HepG2 (cell line): ENCODE measurements at regions of chr13 and their contacts with region 1.

Region 1: DNA sequence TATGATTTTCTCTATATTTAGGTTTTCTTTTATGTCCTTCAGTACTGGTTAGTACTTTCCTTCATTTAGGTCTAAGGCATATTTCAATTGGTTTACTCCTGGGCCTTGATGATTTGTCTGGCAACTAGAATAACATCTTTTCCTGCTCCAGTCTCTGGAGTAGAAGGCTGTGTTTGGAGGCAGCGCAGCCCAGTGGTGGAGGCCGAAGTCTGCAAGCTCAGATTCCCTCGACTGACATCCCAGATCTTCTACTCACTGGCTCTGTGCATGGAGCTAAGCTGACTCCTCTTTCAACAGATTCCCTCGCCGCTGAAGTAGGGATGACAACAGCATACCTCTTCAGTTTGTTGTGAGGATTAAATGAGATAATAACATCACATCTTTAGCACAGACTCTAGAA is 141.0 kb downstream of the RAP2A start:
- DNase-seq: peak; percentile 38
- ATAC-seq: peak; percentile 99
- H3K4me3 ChIP-seq: no peak overlapping the region
- H3K27ac ChIP-seq: no peak overlapping the region
- H3K4me1 ChIP-seq: peaks cover 11% of the 10 kb centered on the region
- H3K27me3 ChIP-seq: no peaks in the 10 kb centered on the region
- CTCF ChIP-seq: peak; percentile 91
- EP300 ChIP-seq: no peak
- POLR2A ChIP-seq: no peak
- RAD21 ChIP-seq: peak; percentile 80

Region 2: GRCh38 chr13:97018029-97018831 is 556.7 kb before region 1 on chr13:
- CTCF ChIA-PET with region 1: no interaction called
- POLR2A ChIA-PET with region 1: no interaction called
- in situ Hi-C with region 1: no loop called
- intact Hi-C with region 1: loop called (anchors 10 kb)
- DNase-seq: peak; percentile 36
- ATAC-seq: peak; percentile 85
- H3K4me3 ChIP-seq: no peak overlapping the region
- H3K27ac ChIP-seq: no peak overlapping the region
- H3K4me1 ChIP-seq: no peaks in the 10 kb centered on the region
- H3K27me3 ChIP-seq: peaks cover 1 to 8% of the 10 kb centered on the region in 2 experiments; a peak in 1 of 5 replicates
- CTCF ChIP-seq: peak; percentile 81
- EP300 ChIP-seq: no peak
- POLR2A ChIP-seq: no peak
- RAD21 ChIP-seq: no peak

Region 3: DNA sequence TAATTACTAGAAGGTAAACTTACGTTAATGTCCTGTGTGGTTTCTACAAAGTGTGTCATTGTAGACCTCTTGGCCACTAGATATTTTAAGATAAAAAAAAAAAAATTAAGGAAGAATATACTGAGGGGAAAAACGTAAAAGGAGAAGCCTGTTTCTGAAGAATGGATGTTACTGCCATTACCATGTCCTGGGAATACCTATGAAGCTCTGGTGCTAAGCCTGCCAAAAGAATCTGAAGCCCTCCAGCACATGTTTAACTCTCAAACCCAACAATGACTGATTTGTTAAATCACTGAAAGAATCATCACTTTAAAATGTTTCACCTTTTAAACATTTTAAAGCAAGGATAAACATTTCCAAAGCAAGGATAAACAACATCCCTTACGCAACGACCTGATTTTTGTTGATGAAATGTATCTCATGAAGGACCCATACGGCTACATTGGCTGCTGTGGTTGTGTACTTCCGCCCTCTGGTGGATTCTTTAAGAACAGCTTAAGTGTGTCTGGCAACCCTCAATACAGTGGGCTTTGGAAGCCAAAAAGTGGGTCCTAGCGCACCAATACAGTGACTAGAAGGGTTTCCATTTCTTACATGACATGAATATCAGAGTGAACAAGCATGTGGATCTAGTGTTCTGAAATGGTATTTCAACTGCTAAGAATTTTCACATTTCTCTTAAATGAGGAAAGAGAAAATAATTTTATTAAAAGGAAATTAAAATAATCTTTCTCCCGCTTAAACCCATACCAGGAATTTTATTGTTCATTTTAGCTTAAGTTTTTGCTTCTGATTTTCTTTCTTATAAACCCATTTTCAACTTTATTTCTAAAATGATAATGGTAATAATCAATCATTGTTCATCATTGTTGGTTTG is 215.5 kb before region 1 on chr13:
- CTCF ChIA-PET with region 1: no interaction called
- POLR2A ChIA-PET with region 1: no interaction called
- in situ Hi-C with region 1: no loop called
- intact Hi-C with region 1: loop called (anchors 10 kb)
- DNase-seq: peak; percentile 73
- ATAC-seq: peak; percentile 91
- H3K4me3 ChIP-seq: no peak overlapping the region
- H3K27ac ChIP-seq: no peak overlapping the region
- H3K4me1 ChIP-seq: peaks cover 15% of the 10 kb centered on the region
- H3K27me3 ChIP-seq: no peaks in the 10 kb centered on the region
- CTCF ChIP-seq: peak; percentile 84
- EP300 ChIP-seq: no peak
- POLR2A ChIP-seq: no peak
- RAD21 ChIP-seq: peak; percentile 65

Region 4: GRCh38 chr13:97432917-97433726 is 141.8 kb before region 1 on chr13:
- CTCF ChIA-PET with region 1: no interaction called
- POLR2A ChIA-PET with region 1: no interaction called
- in situ Hi-C with region 1: loop called (anchors 5 kb)
- intact Hi-C with region 1: loop called (anchors 1 kb)
- DNase-seq: peak; percentile 99
- ATAC-seq: peak; percentile 93
- H3K4me3 ChIP-seq: peak overlapping the region; percentile 77 to 86 (median 81)
- H3K27ac ChIP-seq: peak overlapping the region; percentile 96
- H3K4me1 ChIP-seq: peaks cover 50% of the 10 kb centered on the region
- H3K27me3 ChIP-seq: no peaks in the 10 kb centered on the region
- CTCF ChIP-seq: peak; percentile 26
- EP300 ChIP-seq: peak in 1 of 2 experiments; percentile 93; a peak in 2 of 4 replicates
- POLR2A ChIP-seq: peak; percentile 58 to 65
- RAD21 ChIP-seq: no peak

Region 5: DNA sequence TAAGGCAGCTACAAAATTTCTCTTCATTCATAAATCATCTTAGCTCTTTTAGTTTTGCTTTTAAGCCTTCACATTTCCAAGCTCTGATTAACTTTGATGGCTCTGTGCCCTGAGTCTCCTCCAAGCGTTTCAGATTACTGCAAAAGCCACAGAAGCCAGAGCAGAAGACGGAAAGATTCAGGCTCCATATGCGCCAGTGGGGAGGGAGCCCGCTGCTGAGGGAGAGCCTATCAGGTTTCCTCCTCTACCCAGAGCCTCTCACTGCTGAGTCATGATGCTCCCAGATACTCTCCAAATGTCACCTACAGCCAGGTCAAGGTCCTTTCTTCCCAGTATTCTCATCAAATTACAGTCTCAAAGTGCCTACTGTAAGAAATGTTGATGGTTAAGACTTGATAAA is 52.6 kb after region 1 on chr13:
- CTCF ChIA-PET with region 1: no interaction called
- POLR2A ChIA-PET with region 1: no interaction called
- in situ Hi-C with region 1: no loop called
- intact Hi-C with region 1: loop called (anchors 5 kb)
- DNase-seq: peak; percentile 50
- ATAC-seq: peak; percentile 95
- H3K4me3 ChIP-seq: no peak overlapping the region
- H3K27ac ChIP-seq: no peak overlapping the region
- H3K4me1 ChIP-seq: no peaks in the 10 kb centered on the region
- H3K27me3 ChIP-seq: peaks cover 0 to 1% of the 10 kb centered on the region in 2 experiments; a peak in 2 of 5 replicates
- CTCF ChIP-seq: no peak
- EP300 ChIP-seq: no peak
- POLR2A ChIP-seq: no peak
- RAD21 ChIP-seq: no peak

Region 6: DNA sequence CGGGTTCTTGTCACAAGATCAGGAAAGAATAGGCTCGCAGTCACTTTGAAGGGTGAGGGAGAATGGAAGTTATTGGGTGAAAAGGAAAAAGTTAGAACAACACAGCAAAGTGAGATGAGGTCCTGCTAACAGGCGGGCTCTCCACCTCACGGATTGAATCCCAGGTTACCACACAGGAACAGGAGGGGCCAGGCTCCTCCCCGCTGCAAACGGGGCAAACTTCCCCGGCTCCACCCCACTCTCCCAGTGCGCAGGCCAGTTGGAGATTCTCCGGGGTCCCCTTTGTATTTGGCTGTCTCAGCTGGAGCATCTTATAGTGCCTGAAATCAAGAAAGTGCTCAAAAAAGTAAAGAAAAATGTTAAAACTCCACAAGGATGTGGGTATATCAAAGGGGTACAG is 300.3 kb after region 1 on chr13:
- CTCF ChIA-PET with region 1: no interaction called
- POLR2A ChIA-PET with region 1: no interaction called
- in situ Hi-C with region 1: no loop called
- intact Hi-C with region 1: no loop called
- DNase-seq: no peak
- ATAC-seq: peak; percentile 41; the same call in 1 of the 3 replicates
- H3K4me3 ChIP-seq: no peak overlapping the region
- H3K27ac ChIP-seq: no peak overlapping the region
- H3K4me1 ChIP-seq: no peaks in the 10 kb centered on the region
- H3K27me3 ChIP-seq: peaks cover 3 to 27% of the 10 kb centered on the region in 2 experiments; a peak in 3 of 5 replicates
- CTCF ChIP-seq: no peak
- EP300 ChIP-seq: no peak
- POLR2A ChIP-seq: no peak
- RAD21 ChIP-seq: no peak

Region 7: DNA sequence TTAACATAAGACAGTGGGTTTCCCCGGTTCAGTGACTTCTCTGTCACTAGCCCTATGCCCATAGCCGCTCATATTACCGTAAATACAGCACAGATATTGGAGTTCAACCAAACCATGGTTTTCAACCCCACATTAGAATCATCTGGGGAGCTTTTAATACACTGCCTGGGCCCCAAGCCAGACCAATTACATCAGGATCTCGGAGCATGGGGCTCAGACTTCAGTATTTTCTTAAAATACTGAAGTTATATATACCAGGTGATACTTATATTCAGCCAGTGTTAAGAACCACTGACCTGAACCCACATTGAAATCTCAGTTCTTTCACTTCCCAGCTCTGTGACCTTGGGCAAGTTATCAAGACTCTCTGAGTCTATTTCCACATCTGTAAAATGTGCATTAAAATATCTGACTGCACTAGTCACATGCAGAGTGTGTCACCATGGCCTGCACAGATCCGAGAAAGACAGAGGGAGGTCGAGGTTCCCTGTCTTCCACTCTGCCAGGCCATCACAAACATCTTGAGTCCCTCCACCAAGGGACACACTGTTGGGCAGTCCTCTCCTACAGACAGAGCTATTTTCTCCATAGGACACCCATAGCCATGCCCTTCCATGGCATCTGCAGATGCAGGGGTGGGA is 346.4 kb after region 1 on chr13:
- CTCF ChIA-PET with region 1: no interaction called
- POLR2A ChIA-PET with region 1: no interaction called
- in situ Hi-C with region 1: no loop called
- intact Hi-C with region 1: no loop called
- DNase-seq: no peak
- ATAC-seq: no peak
- H3K4me3 ChIP-seq: no peak overlapping the region
- H3K27ac ChIP-seq: no peak overlapping the region
- H3K4me1 ChIP-seq: no peaks in the 10 kb centered on the region
- H3K27me3 ChIP-seq: peaks cover 1 to 12% of the 10 kb centered on the region in 2 experiments; a peak in 4 of 5 replicates
- CTCF ChIP-seq: no peak
- EP300 ChIP-seq: no peak
- POLR2A ChIP-seq: no peak
- RAD21 ChIP-seq: no peak

Region 8: GRCh38 chr13:98004111-98004510 is 429.2 kb after region 1 on chr13:
- CTCF ChIA-PET with region 1: no interaction called
- POLR2A ChIA-PET with region 1: no interaction called
- in situ Hi-C with region 1: no loop called
- intact Hi-C with region 1: no loop called
- DNase-seq: no peak
- ATAC-seq: no peak
- H3K4me3 ChIP-seq: no peak overlapping the region
- H3K27ac ChIP-seq: no peak overlapping the region
- H3K4me1 ChIP-seq: no peaks in the 10 kb centered on the region
- H3K27me3 ChIP-seq: no peaks in the 10 kb centered on the region
- CTCF ChIP-seq: no peak
- EP300 ChIP-seq: no peak
- POLR2A ChIP-seq: no peak
- RAD21 ChIP-seq: no peak